Mammary epithelial cell (primary cell): ENCODE measurements at regions of chr19 and their contacts with region 1.

Region 1: GRCh38 chr19:47100290-47100689 is 13.3 kb downstream of the ZC3H4 start:
- DNase-seq: no peak
- H3K4me3 ChIP-seq: no peak overlapping the region
- H3K27ac ChIP-seq: no peak overlapping the region
- H3K4me1 ChIP-seq: peaks cover 33% of the 10 kb centered on the region
- H3K27me3 ChIP-seq: no peaks in the 10 kb centered on the region
- CTCF ChIP-seq: no peak

Region 2: DNA sequence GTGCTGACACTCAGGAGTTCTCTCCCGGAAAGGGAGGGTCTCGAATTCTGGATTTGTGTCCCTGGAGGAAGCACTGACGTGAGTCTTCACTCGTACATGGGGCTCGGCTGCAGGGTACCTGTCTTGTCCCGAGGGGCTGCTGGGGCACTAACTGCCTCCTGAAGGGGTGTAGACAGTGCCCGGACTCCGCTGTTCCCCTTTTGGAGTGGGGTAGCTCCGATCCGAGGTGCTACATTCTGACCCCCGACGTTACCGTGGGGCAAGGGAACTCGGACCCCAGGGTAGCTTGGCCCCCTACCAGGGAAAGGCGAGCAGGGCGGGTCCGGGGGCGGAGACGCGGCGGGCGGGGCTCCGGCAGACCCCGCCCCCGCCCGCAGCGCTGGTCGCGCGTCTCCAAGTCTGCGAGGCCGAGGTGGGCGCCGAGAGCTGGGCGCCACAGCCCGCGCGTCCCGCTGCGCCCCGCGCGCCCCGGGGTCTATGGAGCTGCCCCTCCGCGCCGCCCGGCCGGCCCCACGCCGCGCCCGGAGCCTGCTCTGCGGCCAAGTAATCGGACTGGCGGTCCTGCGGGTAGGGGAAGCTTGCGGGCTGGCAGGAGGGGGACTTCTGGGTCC is 80.8 kb before region 1 on chr19 and contains the start of gene NPAS1:
- CTCF ChIA-PET with region 1: no interaction called
- dilution Hi-C with region 1: loop called (anchors 5 kb)
- in situ Hi-C with region 1: no loop called
- intact Hi-C with region 1: no loop called
- DNase-seq: no peak
- H3K4me3 ChIP-seq: peak within 1 kb of the TSS in 1 of 3 experiments; percentile 38
- H3K27ac ChIP-seq: no peak within 1 kb of the TSS
- H3K4me1 ChIP-seq: peaks cover 19% of the 10 kb centered on the region
- H3K27me3 ChIP-seq: peaks cover 39% of the 10 kb centered on the region
- CTCF ChIP-seq: no peak
- total RNA-seq, gene NPAS1: 0.67 to 0.71 TPM

Region 3: GRCh38 chr19:47047763-47048405 is 52.4 kb before region 1 on chr19:
- CTCF ChIA-PET with region 1: no interaction called
- dilution Hi-C with region 1: loop called (anchors 5 kb)
- in situ Hi-C with region 1: no loop called
- intact Hi-C with region 1: no loop called
- DNase-seq: peak; percentile 83
- H3K4me3 ChIP-seq: peak overlapping the region; percentile 68 to 78 (median 78)
- H3K27ac ChIP-seq: no peak overlapping the region
- H3K4me1 ChIP-seq: no peaks in the 10 kb centered on the region
- H3K27me3 ChIP-seq: no peaks in the 10 kb centered on the region
- CTCF ChIP-seq: no peak

Region 4: GRCh38 chr19:47058621-47059020 is 41.7 kb before region 1 on chr19:
- CTCF ChIA-PET with region 1: no interaction called
- dilution Hi-C with region 1: no loop called
- in situ Hi-C with region 1: no loop called
- intact Hi-C with region 1: no loop called
- DNase-seq: no peak
- H3K4me3 ChIP-seq: no peak overlapping the region
- H3K27ac ChIP-seq: no peak overlapping the region
- H3K4me1 ChIP-seq: no peaks in the 10 kb centered on the region
- H3K27me3 ChIP-seq: no peaks in the 10 kb centered on the region
- CTCF ChIP-seq: no peak

Region 5: DNA sequence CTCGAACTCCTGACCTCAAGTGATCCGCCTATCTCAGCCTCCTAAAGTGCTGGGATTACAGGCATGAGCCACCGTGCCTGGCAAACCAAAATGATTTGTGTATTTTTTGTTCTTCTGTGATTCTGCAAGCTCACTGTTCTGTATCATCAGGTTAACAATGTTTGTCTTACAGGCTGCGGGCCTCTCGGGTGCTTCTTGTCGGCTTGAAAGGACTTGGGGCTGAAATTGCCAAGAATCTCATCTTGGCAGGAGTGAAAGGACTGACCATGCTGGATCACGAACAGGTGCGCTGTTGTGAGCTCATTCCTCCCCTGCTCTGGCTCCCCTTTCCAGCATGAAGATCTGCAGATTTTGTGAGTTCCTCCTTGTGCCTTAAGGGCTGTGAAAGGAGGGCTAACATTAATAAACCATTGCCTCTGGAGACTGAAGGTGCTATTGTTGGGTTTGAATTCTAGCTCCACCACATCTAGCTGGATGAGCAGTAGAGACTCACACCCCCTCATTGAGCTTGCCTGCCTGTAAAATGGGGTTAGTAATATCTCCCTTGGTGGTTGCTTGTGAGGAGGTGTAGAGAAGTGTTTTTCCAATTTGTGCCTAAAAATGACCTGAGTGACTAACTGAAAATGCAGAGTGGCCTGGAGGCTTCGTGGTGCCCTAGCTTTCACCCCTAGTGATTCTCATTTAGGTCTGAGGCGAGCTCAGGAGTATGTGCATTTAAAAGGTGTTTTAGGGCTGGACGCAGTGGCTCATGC is 43.2 kb after region 1 on chr19:
- CTCF ChIA-PET with region 1: no interaction called
- dilution Hi-C with region 1: no loop called
- in situ Hi-C with region 1: no loop called
- intact Hi-C with region 1: no loop called
- DNase-seq: no peak
- H3K4me3 ChIP-seq: no peak overlapping the region
- H3K27ac ChIP-seq: no peak overlapping the region
- H3K4me1 ChIP-seq: no peaks in the 10 kb centered on the region
- H3K27me3 ChIP-seq: no peaks in the 10 kb centered on the region
- CTCF ChIP-seq: no peak

Region 6: GRCh38 chr19:47348819-47349795 is 248.8 kb after region 1 on chr19 and contains the start of gene DHX34:
- CTCF ChIA-PET with region 1: no interaction called
- dilution Hi-C with region 1: no loop called
- in situ Hi-C with region 1: no loop called
- intact Hi-C with region 1: no loop called
- DNase-seq: peak; percentile 97
- H3K4me3 ChIP-seq: peak within 1 kb of the TSS; percentile 74 to 94 (median 78)
- H3K27ac ChIP-seq: peak within 1 kb of the TSS; percentile 59
- H3K4me1 ChIP-seq: no peaks in the 10 kb centered on the region
- H3K27me3 ChIP-seq: no peaks in the 10 kb centered on the region
- CTCF ChIP-seq: peak; percentile 90 to 99
- total RNA-seq, gene DHX34: 10.5 to 22.4 TPM